PC-3 (cell line): ENCODE measurements at regions of chr4 and their contacts with region 1.

Region 1: GRCh38 chr4:175633310-175633709 is 178.8 kb downstream of the GPM6A start:
- DNase-seq: peak; percentile 88
- ATAC-seq: peak; percentile 82
- H3K4me3 ChIP-seq: peak overlapping the region; percentile 38; the same call in 1 of the 2 replicates
- H3K27ac ChIP-seq: peak overlapping the region; percentile 96
- H3K4me1 ChIP-seq: peaks cover 35% of the 10 kb centered on the region
- H3K27me3 ChIP-seq: no peaks in the 10 kb centered on the region
- CTCF ChIP-seq: no peak

Region 2: GRCh38 chr4:175560604-175561003 is 72.7 kb before region 1 on chr4:
- CTCF ChIA-PET with region 1: no interaction called
- POLR2A ChIA-PET with region 1: no interaction called
- intact Hi-C with region 1: loop called (anchors 5 kb)
- DNase-seq: peak; percentile 68
- ATAC-seq: peak; percentile 68
- H3K4me3 ChIP-seq: no peak overlapping the region
- H3K27ac ChIP-seq: no peak overlapping the region
- H3K4me1 ChIP-seq: 0 out of 2 replicates have a peak, but pooled peaks cover 5% of the 10 kb centered on the region
- H3K27me3 ChIP-seq: no peaks in the 10 kb centered on the region
- CTCF ChIP-seq: peak; percentile 67

Region 3: DNA sequence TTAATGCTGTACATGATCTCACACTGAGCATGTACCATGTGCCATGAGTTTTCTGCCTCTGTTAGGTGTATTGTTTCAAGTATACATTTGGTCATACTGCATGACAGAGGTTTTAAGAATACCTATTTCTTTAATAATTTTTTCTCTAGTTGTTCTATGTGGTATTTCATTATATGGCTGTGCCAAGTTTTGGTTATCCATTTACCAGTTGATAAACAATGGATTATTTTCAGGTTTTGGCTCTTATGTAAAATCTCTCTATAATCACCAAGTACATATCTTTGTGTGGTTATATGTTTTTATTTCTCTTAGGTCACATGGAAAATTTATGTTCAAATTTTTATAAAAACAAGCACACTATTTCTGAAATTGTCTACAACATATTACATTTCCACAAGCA is 43.1 kb before region 1 on chr4:
- CTCF ChIA-PET with region 1: no interaction called
- POLR2A ChIA-PET with region 1: no interaction called
- intact Hi-C with region 1: loop called (anchors 5 kb)
- DNase-seq: no peak
- ATAC-seq: no peak
- H3K4me3 ChIP-seq: no peak overlapping the region
- H3K27ac ChIP-seq: no peak overlapping the region
- H3K4me1 ChIP-seq: no peaks in the 10 kb centered on the region
- H3K27me3 ChIP-seq: no peaks in the 10 kb centered on the region
- CTCF ChIP-seq: no peak

Region 4: GRCh38 chr4:175716961-175717360 is 83.7 kb after region 1 on chr4:
- CTCF ChIA-PET with region 1: no interaction called
- POLR2A ChIA-PET with region 1: no interaction called
- intact Hi-C with region 1: loop called (anchors 2 kb)
- DNase-seq: no peak
- ATAC-seq: no peak
- H3K4me3 ChIP-seq: no peak overlapping the region
- H3K27ac ChIP-seq: no peak overlapping the region
- H3K4me1 ChIP-seq: no peaks in the 10 kb centered on the region
- H3K27me3 ChIP-seq: no peaks in the 10 kb centered on the region
- CTCF ChIP-seq: no peak

Region 5: DNA sequence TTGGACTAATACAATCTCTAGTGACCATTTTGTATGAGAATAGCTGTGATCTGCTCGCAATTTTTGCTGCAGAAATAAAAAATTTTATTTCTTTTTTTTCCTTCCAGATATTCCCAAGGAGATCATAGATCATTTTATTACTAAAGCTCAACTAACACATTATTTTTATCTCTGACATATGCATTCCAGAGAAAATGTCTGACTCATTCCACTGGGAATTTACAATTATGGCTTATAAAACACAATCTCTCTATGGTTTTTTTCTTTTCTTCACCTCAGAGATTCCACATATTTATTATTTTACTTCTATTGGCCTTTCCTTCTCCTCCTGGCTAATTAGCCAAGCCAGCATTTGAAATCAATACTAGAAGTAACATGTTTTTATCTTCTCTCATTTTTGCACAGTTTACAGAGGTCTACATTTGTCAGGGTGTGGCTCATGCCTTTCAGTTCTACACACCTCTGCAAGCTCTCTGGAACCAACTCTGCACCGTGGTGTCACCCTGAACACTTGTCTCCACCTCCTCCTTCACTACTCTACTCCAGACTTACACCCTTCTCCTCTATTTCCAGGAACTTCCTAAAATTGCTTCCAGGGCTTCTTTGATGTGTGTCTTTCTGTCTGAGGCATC is 238.6 kb after region 1 on chr4:
- CTCF ChIA-PET with region 1: no interaction called
- POLR2A ChIA-PET with region 1: no interaction called
- intact Hi-C with region 1: loop called (anchors 5 kb)
- DNase-seq: peak; percentile 58
- ATAC-seq: peak; percentile 72
- H3K4me3 ChIP-seq: 0 out of 2 replicates have a peak overlapping the region, but pooled peaks have one; percentile 7
- H3K27ac ChIP-seq: peak overlapping the region; percentile 31
- H3K4me1 ChIP-seq: peaks cover 24% of the 10 kb centered on the region
- H3K27me3 ChIP-seq: no peaks in the 10 kb centered on the region
- CTCF ChIP-seq: no peak